ENCODE measurements at regions of chr5 and their contacts with region 1.

Region 1: GRCh38 chr5:69042915-69043658 is 50.7 kb upstream of the SLC30A5 start:
- DNase-seq: peak; percentile 63
- H3K4me3 ChIP-seq: no peak overlapping the region
- H3K27ac ChIP-seq: peak overlapping the region in 1 of 2 experiments; percentile 44; a peak in 2 of 4 replicates
- H3K4me1 ChIP-seq: no peaks in the 10 kb centered on the region; a peak in 1 of 4 replicates
- H3K27me3 ChIP-seq: no peaks in the 10 kb centered on the region
- CTCF ChIP-seq: peak; percentile 89
- EP300 ChIP-seq: no peak
- RAD21 ChIP-seq: peak; percentile 91

Region 2: DNA sequence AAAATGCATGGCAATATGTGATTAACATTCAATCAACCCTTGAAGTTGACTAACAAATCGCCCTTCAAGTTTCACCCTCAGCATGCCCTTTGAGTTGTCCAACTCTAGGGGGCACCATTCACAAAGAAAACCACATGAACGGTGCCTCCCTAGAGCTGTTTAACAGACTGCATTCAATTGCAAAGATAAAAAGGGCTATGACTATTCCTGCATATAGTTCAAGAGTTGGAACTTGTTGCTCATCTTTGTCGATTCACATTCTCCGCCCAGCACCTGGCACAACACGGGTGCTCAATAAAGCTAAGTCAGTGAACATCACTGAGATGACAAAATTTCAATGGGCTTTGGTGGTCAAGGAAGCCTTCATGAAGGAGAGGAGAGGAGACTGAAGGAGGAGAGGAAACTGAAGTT is 18.8 kb before region 1 on chr5:
- CTCF ChIA-PET with region 1: interaction called, 262 read pairs
- POLR2A ChIA-PET with region 1: no interaction called
- DNase-seq: peak; percentile 68
- H3K4me3 ChIP-seq: no peak overlapping the region
- H3K27ac ChIP-seq: 0 out of 4 replicates have a peak overlapping the region, but pooled peaks of 1 of the 2 experiments have one; percentile 16
- H3K4me1 ChIP-seq: peaks cover 0 to 3% of the 10 kb centered on the region in 2 experiments; a peak in 1 of 4 replicates
- H3K27me3 ChIP-seq: no peaks in the 10 kb centered on the region
- CTCF ChIP-seq: peak; percentile 68
- EP300 ChIP-seq: no peak
- RAD21 ChIP-seq: peak; percentile 92

Region 3: GRCh38 chr5:69083412-69083811 is 40.3 kb after region 1 on chr5:
- CTCF ChIA-PET with region 1: interaction called, 10 read pairs
- POLR2A ChIA-PET with region 1: no interaction called
- DNase-seq: no peak
- H3K4me3 ChIP-seq: no peak overlapping the region
- H3K27ac ChIP-seq: no peak overlapping the region
- H3K4me1 ChIP-seq: no peaks in the 10 kb centered on the region
- H3K27me3 ChIP-seq: no peaks in the 10 kb centered on the region
- CTCF ChIP-seq: peak; percentile 18; the same call in 1 of the 2 replicates
- EP300 ChIP-seq: no peak
- RAD21 ChIP-seq: 0 out of 2 replicates have a peak, but pooled peaks have one; percentile 20